Endothelial cell of umbilical vein (primary cell): ENCODE measurements at regions of chr12 and their contacts with region 1.

Region 1: DNA sequence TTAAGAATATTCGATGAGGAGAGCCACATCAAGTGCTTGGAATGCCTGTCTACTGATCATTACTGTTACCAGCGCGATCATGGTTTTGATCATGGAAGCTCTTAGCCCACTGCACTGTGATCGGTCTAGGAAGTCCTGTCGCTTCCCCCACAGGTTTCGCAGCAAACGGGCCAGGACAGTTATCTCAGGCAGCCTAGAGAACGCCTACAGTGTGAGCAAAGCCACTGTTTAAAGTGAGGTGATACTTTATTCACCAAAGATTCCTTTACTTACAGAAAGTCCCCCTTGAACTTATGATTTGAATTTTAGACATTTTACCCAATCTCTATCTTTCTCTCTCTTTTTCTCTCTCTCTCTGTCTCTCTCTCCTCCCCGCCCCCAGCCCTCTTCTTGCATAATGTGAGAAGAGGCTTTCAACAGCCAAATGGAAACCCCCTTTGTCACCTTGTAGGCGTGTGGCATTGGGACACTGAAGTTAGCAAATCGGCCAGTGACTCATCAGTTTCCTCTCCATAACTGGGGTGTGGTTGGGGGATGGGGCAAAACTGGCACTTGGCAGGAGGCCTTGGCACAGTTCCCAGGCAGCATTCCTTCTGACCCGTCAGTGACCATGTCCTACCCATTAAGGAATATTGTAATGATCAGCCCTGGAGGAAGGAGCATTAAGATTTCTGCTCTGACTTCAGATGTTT is 214.8 kb downstream of the CHST11 start:
- DNase-seq: peak; percentile 94
- H3K4me3 ChIP-seq: no peak overlapping the region
- H3K27ac ChIP-seq: peak overlapping the region; percentile 36
- H3K4me1 ChIP-seq: peaks cover 19% of the 10 kb centered on the region
- H3K27me3 ChIP-seq: no peaks in the 10 kb centered on the region
- CTCF ChIP-seq: no peak
- POLR2A ChIP-seq: no peak

Region 2: GRCh38 chr12:104604070-104604994 is 67.2 kb before region 1 on chr12:
- CTCF ChIA-PET with region 1: interaction called, 5 read pairs
- POLR2A ChIA-PET with region 1: no interaction called
- dilution Hi-C with region 1: no loop called
- intact Hi-C with region 1: loop called (anchors 1 kb)
- DNase-seq: peak; percentile 98
- H3K4me3 ChIP-seq: peak overlapping the region in 1 of 3 experiments; percentile 38
- H3K27ac ChIP-seq: peak overlapping the region; percentile 89
- H3K4me1 ChIP-seq: peaks cover 35% of the 10 kb centered on the region
- H3K27me3 ChIP-seq: no peaks in the 10 kb centered on the region
- CTCF ChIP-seq: no peak
- POLR2A ChIP-seq: peak; percentile 30

Region 3: DNA sequence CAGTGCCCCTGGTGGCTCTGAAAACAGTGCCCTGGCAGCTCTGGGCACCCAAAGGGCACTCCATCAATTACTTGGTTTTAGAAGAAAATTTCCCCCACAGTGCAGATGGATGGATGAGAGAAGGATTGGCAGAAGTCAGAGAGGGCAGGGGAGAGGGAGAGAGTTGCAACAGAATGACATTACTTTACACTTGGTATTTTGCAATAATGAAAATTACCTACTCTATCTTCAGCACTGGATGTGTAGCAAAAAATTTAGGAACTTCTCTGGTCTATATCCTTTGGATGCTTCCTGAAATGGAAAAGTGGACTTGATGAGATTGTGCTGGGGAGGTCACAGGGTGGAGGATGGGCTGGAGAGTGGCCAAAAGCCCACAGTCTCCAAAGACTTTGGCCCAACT is 21.6 kb before region 1 on chr12:
- CTCF ChIA-PET with region 1: no interaction called
- POLR2A ChIA-PET with region 1: no interaction called
- dilution Hi-C with region 1: no loop called
- intact Hi-C with region 1: loop called (anchors 1 kb)
- DNase-seq: no peak
- H3K4me3 ChIP-seq: no peak overlapping the region
- H3K27ac ChIP-seq: no peak overlapping the region
- H3K4me1 ChIP-seq: no peaks in the 10 kb centered on the region
- H3K27me3 ChIP-seq: no peaks in the 10 kb centered on the region
- CTCF ChIP-seq: no peak
- POLR2A ChIP-seq: no peak

Region 4: GRCh38 chr12:104686196-104686595 is 14.6 kb after region 1 on chr12:
- CTCF ChIA-PET with region 1: no interaction called
- POLR2A ChIA-PET with region 1: no interaction called
- dilution Hi-C with region 1: no loop called
- intact Hi-C with region 1: loop called (anchors 2 kb)
- DNase-seq: peak; percentile 64
- H3K4me3 ChIP-seq: no peak overlapping the region
- H3K27ac ChIP-seq: peak overlapping the region; percentile 46
- H3K4me1 ChIP-seq: peaks cover 9% of the 10 kb centered on the region
- H3K27me3 ChIP-seq: no peaks in the 10 kb centered on the region
- CTCF ChIP-seq: no peak
- POLR2A ChIP-seq: no peak

Region 5: GRCh38 chr12:104720339-104721038 is 48.9 kb after region 1 on chr12:
- CTCF ChIA-PET with region 1: no interaction called
- POLR2A ChIA-PET with region 1: no interaction called
- dilution Hi-C with region 1: no loop called
- intact Hi-C with region 1: loop called (anchors 5 kb)
- DNase-seq: peak; percentile 44
- H3K4me3 ChIP-seq: peak overlapping the region in 1 of 3 experiments; percentile 30
- H3K27ac ChIP-seq: peak overlapping the region; percentile 26
- H3K4me1 ChIP-seq: peaks cover 17% of the 10 kb centered on the region
- H3K27me3 ChIP-seq: no peaks in the 10 kb centered on the region
- CTCF ChIP-seq: no peak
- POLR2A ChIP-seq: no peak

Region 6: GRCh38 chr12:105053116-105053572 is 381.6 kb after region 1 on chr12:
- CTCF ChIA-PET with region 1: no interaction called
- POLR2A ChIA-PET with region 1: no interaction called
- dilution Hi-C with region 1: no loop called
- intact Hi-C with region 1: loop called (anchors 10 kb)
- DNase-seq: peak; percentile 86
- H3K4me3 ChIP-seq: no peak overlapping the region
- H3K27ac ChIP-seq: no peak overlapping the region
- H3K4me1 ChIP-seq: no peaks in the 10 kb centered on the region
- H3K27me3 ChIP-seq: no peaks in the 10 kb centered on the region
- CTCF ChIP-seq: peak; percentile 80 to 81
- POLR2A ChIP-seq: no peak

Region 7: GRCh38 chr12:105279460-105280056 is 608.0 kb after region 1 on chr12:
- CTCF ChIA-PET with region 1: no interaction called
- POLR2A ChIA-PET with region 1: no interaction called
- dilution Hi-C with region 1: no loop called
- intact Hi-C with region 1: no loop called
- DNase-seq: peak; percentile 53
- H3K4me3 ChIP-seq: no peak overlapping the region
- H3K27ac ChIP-seq: no peak overlapping the region
- H3K4me1 ChIP-seq: peaks cover 9% of the 10 kb centered on the region
- H3K27me3 ChIP-seq: no peaks in the 10 kb centered on the region
- CTCF ChIP-seq: peak; percentile 60 to 66
- POLR2A ChIP-seq: no peak